ENCODE measurements at regions of chr7 and their contacts with region 1.

Region 1: GRCh38 chr7:90708841-90709317 is 112.8 kb downstream of the CDK14 start:
- DNase-seq: peak; percentile 67
- ATAC-seq: peak; percentile 71
- H3K4me3 ChIP-seq: peak overlapping the region; percentile 64
- H3K27ac ChIP-seq: peak overlapping the region; percentile 78
- H3K4me1 ChIP-seq: peaks cover 7% of the 10 kb centered on the region
- H3K27me3 ChIP-seq: no peaks in the 10 kb centered on the region
- CTCF ChIP-seq: peak; percentile 84 to 93 (median 88)
- EP300 ChIP-seq: no peak
- POLR2A ChIP-seq: no peak
- RAD21 ChIP-seq: peak; percentile 89

Region 2: GRCh38 chr7:90211391-90212148 is 497.3 kb before region 1 on chr7 and contains the start of gene STEAP2:
- CTCF ChIA-PET with region 1: no interaction called
- POLR2A ChIA-PET with region 1: no interaction called
- RAD21 ChIA-PET with region 1: no interaction called
- SMC1A ChIA-PET with region 1: no interaction called
- in situ Hi-C with region 1: no loop called
- intact Hi-C with region 1: no loop called
- DNase-seq: no peak
- ATAC-seq: peak; percentile 91
- H3K4me3 ChIP-seq: no peak within 1 kb of the TSS
- H3K27ac ChIP-seq: no peak within 1 kb of the TSS
- H3K4me1 ChIP-seq: no peaks in the 10 kb centered on the region
- H3K27me3 ChIP-seq: peaks cover 1 to 17% of the 10 kb centered on the region in 2 experiments
- CTCF ChIP-seq: peak; percentile 32 to 61 (median 44)
- EP300 ChIP-seq: no peak
- POLR2A ChIP-seq: no peak
- RAD21 ChIP-seq: no peak
- polyA plus RNA-seq, gene STEAP2: 0.64 to 0.80 TPM

Region 3: GRCh38 chr7:90403174-90404113 is 305.4 kb before region 1 on chr7 and contains the start of gene CLDN12:
- CTCF ChIA-PET with region 1: no interaction called
- POLR2A ChIA-PET with region 1: no interaction called
- RAD21 ChIA-PET with region 1: no interaction called
- SMC1A ChIA-PET with region 1: no interaction called
- in situ Hi-C with region 1: no loop called
- intact Hi-C with region 1: no loop called
- DNase-seq: peak; percentile 76
- ATAC-seq: peak; percentile 99
- H3K4me3 ChIP-seq: peak within 1 kb of the TSS; percentile 76
- H3K27ac ChIP-seq: peak within 1 kb of the TSS; percentile 88
- H3K4me1 ChIP-seq: no peaks in the 10 kb centered on the region
- H3K27me3 ChIP-seq: no peaks in the 10 kb centered on the region
- CTCF ChIP-seq: no peak
- EP300 ChIP-seq: peak; percentile 93 to 98; a peak in 3 of 4 replicates
- POLR2A ChIP-seq: peak; percentile 47
- RAD21 ChIP-seq: no peak
- polyA plus RNA-seq, gene CLDN12: 3.1 to 5.6 TPM

Region 4: GRCh38 chr7:90690159-90690858 is 18.6 kb before region 1 on chr7:
- CTCF ChIA-PET with region 1: interaction called, 12 read pairs
- POLR2A ChIA-PET with region 1: interaction called, 4 read pairs
- RAD21 ChIA-PET with region 1: interaction called, 5 read pairs
- SMC1A ChIA-PET with region 1: interaction called, 13 read pairs
- in situ Hi-C with region 1: no loop called
- intact Hi-C with region 1: no loop called
- DNase-seq: no peak
- ATAC-seq: peak; percentile 69
- H3K4me3 ChIP-seq: no peak overlapping the region
- H3K27ac ChIP-seq: no peak overlapping the region
- H3K4me1 ChIP-seq: peaks cover 4% of the 10 kb centered on the region; the same call in 1 of the 2 replicates
- H3K27me3 ChIP-seq: no peaks in the 10 kb centered on the region
- CTCF ChIP-seq: peak in 2 of 3 experiments; percentile 10 to 18; a peak in 2 of 6 replicates
- EP300 ChIP-seq: no peak
- POLR2A ChIP-seq: no peak
- RAD21 ChIP-seq: peak; percentile 73

Region 5: DNA sequence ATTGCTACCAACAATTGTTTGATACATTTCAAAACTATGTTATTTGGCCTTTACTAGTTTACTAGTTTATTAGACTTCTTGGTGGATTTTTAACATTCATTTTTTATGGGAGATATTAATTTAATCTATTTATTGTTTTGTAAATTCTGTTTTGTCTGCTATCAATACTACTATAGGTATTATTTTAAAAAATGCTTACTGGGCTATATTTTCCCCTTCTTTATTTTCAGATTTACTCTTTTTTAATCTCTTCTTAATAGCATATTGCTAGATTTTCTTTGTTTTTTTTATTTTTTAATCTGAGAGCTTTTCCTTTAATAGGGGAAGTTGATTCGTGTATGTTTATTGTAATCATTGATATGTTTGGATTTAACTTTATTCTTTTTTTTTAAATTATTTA is 34.7 kb after region 1 on chr7:
- CTCF ChIA-PET with region 1: interaction called, 183 read pairs
- POLR2A ChIA-PET with region 1: interaction called, 4 read pairs
- RAD21 ChIA-PET with region 1: interaction called, 15 read pairs
- SMC1A ChIA-PET with region 1: interaction called, 73 read pairs
- in situ Hi-C with region 1: no loop called
- intact Hi-C with region 1: no loop called
- DNase-seq: no peak
- ATAC-seq: no peak
- H3K4me3 ChIP-seq: no peak overlapping the region
- H3K27ac ChIP-seq: no peak overlapping the region
- H3K4me1 ChIP-seq: no peaks in the 10 kb centered on the region
- H3K27me3 ChIP-seq: no peaks in the 10 kb centered on the region
- CTCF ChIP-seq: no peak
- EP300 ChIP-seq: no peak
- POLR2A ChIP-seq: no peak
- RAD21 ChIP-seq: no peak

Region 6: GRCh38 chr7:90777465-90777864 is 68.6 kb after region 1 on chr7:
- CTCF ChIA-PET with region 1: interaction called, 7 read pairs
- POLR2A ChIA-PET with region 1: interaction called, 3 read pairs
- RAD21 ChIA-PET with region 1: interaction called, 17 read pairs
- SMC1A ChIA-PET with region 1: interaction called, 19 read pairs
- in situ Hi-C with region 1: no loop called
- intact Hi-C with region 1: no loop called
- DNase-seq: no peak
- ATAC-seq: peak; percentile 63
- H3K4me3 ChIP-seq: peak overlapping the region; percentile 65; the same call in 1 of the 2 replicates
- H3K27ac ChIP-seq: peak overlapping the region; percentile 77
- H3K4me1 ChIP-seq: peaks cover 35% of the 10 kb centered on the region
- H3K27me3 ChIP-seq: no peaks in the 10 kb centered on the region
- CTCF ChIP-seq: no peak
- EP300 ChIP-seq: no peak
- POLR2A ChIP-seq: no peak
- RAD21 ChIP-seq: no peak

Region 7: DNA sequence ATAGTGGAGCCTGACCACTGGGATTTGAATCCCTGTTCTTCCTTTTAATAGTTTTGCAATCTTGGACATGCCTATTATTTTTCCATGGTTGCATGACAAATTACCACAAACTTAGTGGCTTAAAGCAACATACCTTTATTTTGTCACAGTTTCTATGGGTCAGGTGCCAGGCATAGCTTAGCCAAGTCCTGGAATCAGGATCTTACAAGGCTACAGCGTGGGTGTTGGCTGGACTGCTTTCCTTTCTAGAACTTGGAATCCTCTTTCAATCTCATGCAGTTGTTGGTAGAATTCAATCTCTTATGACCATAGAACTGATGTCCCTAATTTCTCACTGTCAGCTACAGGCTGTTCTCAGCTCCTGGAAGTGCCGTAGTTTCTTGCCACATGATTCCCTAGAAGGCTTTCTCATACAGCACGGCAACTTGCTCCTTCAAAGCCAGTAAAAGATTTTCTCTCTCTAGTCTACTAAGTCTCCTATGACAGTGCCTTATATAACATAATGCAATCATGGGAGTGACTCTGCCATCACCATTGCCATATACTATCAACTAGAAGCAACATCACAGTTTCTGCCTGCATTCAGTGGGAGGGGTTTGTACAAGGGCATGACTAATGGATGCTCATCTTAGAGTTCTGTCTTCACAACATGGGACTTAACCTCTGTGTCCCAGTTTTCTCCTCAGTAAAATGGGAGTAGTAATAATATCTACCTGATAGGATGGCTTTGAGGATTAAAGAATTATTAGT is 311.9 kb after region 1 on chr7:
- CTCF ChIA-PET with region 1: interaction called, 5 read pairs
- POLR2A ChIA-PET with region 1: no interaction called
- RAD21 ChIA-PET with region 1: interaction called, 5 read pairs
- SMC1A ChIA-PET with region 1: interaction called, 14 read pairs
- in situ Hi-C with region 1: loop called (anchors 5 kb)
- intact Hi-C with region 1: no loop called
- DNase-seq: no peak
- ATAC-seq: no peak
- H3K4me3 ChIP-seq: no peak overlapping the region
- H3K27ac ChIP-seq: no peak overlapping the region
- H3K4me1 ChIP-seq: no peaks in the 10 kb centered on the region
- H3K27me3 ChIP-seq: no peaks in the 10 kb centered on the region
- CTCF ChIP-seq: no peak
- EP300 ChIP-seq: no peak
- POLR2A ChIP-seq: no peak
- RAD21 ChIP-seq: no peak

Region 8: GRCh38 chr7:91082852-91083495 is 374.1 kb after region 1 on chr7:
- CTCF ChIA-PET with region 1: interaction called, 14 read pairs
- POLR2A ChIA-PET with region 1: no interaction called
- RAD21 ChIA-PET with region 1: no interaction called
- SMC1A ChIA-PET with region 1: interaction called, 4 read pairs
- in situ Hi-C with region 1: no loop called
- intact Hi-C with region 1: no loop called
- DNase-seq: no peak
- ATAC-seq: peak; percentile 70
- H3K4me3 ChIP-seq: no peak overlapping the region
- H3K27ac ChIP-seq: no peak overlapping the region
- H3K4me1 ChIP-seq: no peaks in the 10 kb centered on the region
- H3K27me3 ChIP-seq: no peaks in the 10 kb centered on the region
- CTCF ChIP-seq: peak; percentile 45 to 55 (median 45); a peak in 4 of 6 replicates
- EP300 ChIP-seq: no peak
- POLR2A ChIP-seq: no peak
- RAD21 ChIP-seq: peak; percentile 53